HepG2 (cell line): ENCODE measurements at regions of chr9 and their contacts with region 1.

Region 1: GRCh38 chr9:130095872-130096271 is 42.2 kb downstream of the GPR107 start:
- DNase-seq: no peak
- ATAC-seq: no peak
- H3K4me3 ChIP-seq: no peak overlapping the region
- H3K27ac ChIP-seq: no peak overlapping the region
- H3K4me1 ChIP-seq: no peaks in the 10 kb centered on the region
- H3K27me3 ChIP-seq: no peaks in the 10 kb centered on the region
- CTCF ChIP-seq: no peak
- EP300 ChIP-seq: no peak
- POLR2A ChIP-seq: no peak
- RAD21 ChIP-seq: no peak

Region 2: DNA sequence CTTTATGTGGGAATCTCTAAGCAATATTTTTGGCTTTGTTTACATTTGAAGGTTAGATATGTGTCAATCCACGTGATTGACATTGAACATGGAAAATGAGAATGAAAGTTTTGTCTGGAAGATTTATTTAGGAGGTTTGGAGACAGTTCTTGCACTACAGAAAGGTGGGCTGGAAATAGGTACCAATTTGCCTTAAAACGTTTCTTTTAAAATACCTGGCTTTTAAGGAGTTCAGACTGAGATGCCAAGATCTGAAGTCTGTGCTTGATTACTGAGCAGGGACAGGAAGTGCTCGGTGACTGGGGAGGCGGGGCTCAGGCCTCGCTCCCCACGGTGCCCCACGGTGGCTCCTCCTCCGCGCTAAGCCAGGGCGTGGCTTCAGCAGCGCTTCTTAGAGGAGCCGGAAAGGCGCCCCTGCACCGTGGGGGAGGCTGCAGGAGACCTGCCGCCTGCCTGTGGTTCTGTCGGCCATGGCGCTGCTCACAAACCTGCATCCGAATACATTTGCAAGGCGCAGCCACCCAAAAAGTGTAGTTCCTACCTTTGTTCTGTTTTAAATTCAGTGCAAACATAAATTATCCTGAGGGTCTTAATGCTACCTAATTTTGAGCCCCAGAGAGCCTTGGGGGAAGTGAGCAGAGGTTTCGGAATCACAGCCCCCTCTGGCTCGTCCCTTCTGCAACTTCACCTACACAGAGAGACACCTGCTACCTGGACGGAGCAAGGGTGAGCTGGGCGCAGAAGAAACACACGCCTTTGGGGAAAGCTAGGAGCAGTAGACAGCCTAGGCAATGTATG is 211.5 kb before region 1 on chr9:
- CTCF ChIA-PET with region 1: interaction called, 10 read pairs
- POLR2A ChIA-PET with region 1: no interaction called
- in situ Hi-C with region 1: loop called (anchors 10 kb)
- intact Hi-C with region 1: loop called (anchors 5 kb)
- DNase-seq: peak; percentile 66
- ATAC-seq: peak; percentile 81
- H3K4me3 ChIP-seq: peak overlapping the region; percentile 58 to 86 (median 74)
- H3K27ac ChIP-seq: peak overlapping the region; percentile 41
- H3K4me1 ChIP-seq: peaks cover 15% of the 10 kb centered on the region
- H3K27me3 ChIP-seq: no peaks in the 10 kb centered on the region; a peak in 1 of 5 replicates
- CTCF ChIP-seq: no peak
- EP300 ChIP-seq: no peak
- POLR2A ChIP-seq: peak; percentile 54 to 75; a peak in 3 of 4 replicates
- RAD21 ChIP-seq: no peak

Region 3: GRCh38 chr9:130073373-130073772 is 22.5 kb before region 1 on chr9:
- CTCF ChIA-PET with region 1: no interaction called
- POLR2A ChIA-PET with region 1: no interaction called
- in situ Hi-C with region 1: no loop called
- intact Hi-C with region 1: no loop called
- DNase-seq: peak; percentile 21
- ATAC-seq: no peak; the same call in 2 of the 3 replicates
- H3K4me3 ChIP-seq: no peak overlapping the region
- H3K27ac ChIP-seq: peak overlapping the region; percentile 46
- H3K4me1 ChIP-seq: peaks cover 23% of the 10 kb centered on the region
- H3K27me3 ChIP-seq: no peaks in the 10 kb centered on the region
- CTCF ChIP-seq: no peak
- EP300 ChIP-seq: no peak
- POLR2A ChIP-seq: no peak
- RAD21 ChIP-seq: no peak